ENCODE measurements at regions of chr18 and their contacts with region 1.

Region 1: DNA sequence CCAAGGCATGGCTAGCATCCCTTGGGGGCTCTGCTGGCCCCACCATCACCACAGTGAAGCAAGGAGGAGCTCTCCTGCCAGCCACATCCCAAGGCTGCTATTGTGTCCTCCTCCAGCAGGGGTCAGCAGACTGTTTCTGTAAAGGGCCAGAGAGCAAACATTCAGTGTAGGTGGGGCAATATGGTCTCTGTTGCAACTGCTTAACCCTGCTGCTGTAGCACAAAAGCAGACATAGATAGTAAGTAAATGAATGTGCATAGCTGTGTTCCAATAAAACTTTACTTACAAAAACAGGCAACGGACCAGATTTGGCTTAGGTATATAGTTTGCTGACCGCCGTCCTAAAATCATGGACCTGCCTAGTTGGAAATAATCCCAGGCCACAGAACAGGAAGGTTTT is 36.4 kb upstream of the ZBTB7C start:
- DNase-seq: peak; percentile 89
- H3K4me3 ChIP-seq: no peak overlapping the region
- H3K27ac ChIP-seq: no peak overlapping the region
- H3K4me1 ChIP-seq: no peaks in the 10 kb centered on the region
- H3K27me3 ChIP-seq: peaks cover 56% of the 10 kb centered on the region

Region 2: GRCh38 chr18:47912343-47912742 is 533.2 kb before region 1 on chr18:
- in situ Hi-C with region 1: no loop called
- DNase-seq: no peak
- H3K4me3 ChIP-seq: no peak overlapping the region
- H3K27ac ChIP-seq: no peak overlapping the region
- H3K4me1 ChIP-seq: no peaks in the 10 kb centered on the region
- H3K27me3 ChIP-seq: no peaks in the 10 kb centered on the region

Region 3: DNA sequence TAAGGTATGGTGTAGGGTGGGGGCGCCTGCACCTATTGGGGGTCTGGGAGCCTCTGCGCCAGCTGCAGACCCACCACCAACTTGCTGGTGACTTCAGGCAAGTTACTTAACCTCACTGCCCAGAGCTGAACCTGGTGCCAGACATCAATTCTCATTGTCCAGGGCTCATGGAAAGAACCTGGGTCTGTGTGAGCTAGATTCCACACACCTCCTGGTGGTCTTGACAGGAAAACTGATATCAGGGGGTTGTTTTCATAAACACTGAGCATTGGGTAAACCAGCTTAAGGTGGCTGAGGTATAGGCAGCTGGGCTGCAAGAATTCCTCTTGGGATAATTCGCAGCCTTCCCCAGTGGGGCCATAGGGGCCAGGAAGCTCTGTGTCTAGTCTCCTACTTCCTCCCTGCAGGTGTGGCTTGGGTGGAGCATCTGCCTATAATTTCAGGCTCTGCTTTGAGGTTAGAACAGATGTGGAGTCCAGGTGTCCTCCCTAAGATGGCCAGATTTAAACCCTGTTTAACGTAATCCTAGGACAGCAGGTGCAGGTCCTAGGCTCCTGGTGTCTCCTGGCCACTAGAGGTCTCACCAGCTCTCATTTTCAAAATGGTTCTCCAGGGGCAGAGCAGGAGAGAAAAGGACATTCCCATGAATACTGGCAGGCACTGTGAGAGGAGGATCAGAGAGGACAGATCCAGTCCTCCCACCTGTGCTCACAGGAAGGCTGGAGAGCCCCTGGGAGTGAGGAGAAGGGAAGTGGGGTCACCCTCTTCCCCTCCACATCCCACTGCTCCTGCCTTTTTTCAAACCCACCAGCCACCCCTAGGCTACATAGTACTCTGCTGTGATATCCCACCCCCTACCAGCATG is 414.7 kb before region 1 on chr18:
- in situ Hi-C with region 1: loop called (anchors 5 kb)
- DNase-seq: peak; percentile 73
- H3K4me3 ChIP-seq: no peak overlapping the region
- H3K27ac ChIP-seq: no peak overlapping the region
- H3K4me1 ChIP-seq: peaks cover 6% of the 10 kb centered on the region; the same call in 1 of the 2 replicates
- H3K27me3 ChIP-seq: no peaks in the 10 kb centered on the region

Region 4: DNA sequence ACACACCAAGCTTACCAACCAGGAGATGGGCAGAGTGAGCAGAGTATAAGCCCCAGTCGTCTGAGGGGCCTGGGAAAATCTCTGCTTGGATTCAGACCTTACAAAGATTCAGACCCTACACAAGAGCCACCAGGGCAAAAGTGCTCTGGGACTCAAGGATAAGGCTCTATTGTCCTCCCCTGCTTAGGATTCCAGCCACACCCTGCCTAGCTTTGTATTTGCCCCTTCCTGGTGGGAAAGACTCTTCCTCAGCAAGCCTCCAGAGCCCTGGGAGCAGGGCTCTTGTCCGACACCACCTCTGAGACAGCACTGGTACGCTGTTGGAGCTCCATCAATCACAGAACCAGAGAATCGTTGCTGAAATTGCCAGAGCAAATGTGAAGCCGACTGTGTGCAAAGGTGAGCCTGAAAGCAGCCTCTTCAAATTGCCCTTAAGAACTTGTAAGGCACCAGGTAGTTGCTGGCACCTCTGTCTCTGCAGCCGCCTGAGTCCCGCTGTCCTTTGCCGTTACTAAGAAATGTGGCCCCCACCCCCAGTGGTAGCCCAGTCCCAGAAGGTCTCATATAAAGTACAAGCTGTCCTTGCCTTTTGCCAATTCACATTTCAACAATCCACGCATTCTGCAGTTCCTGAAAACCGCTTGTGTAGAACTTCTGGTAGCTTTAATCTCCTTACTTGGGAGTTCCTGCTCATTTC is 242.0 kb after region 1 on chr18:
- in situ Hi-C with region 1: no loop called
- DNase-seq: no peak
- H3K4me3 ChIP-seq: no peak overlapping the region
- H3K27ac ChIP-seq: no peak overlapping the region
- H3K4me1 ChIP-seq: no peaks in the 10 kb centered on the region
- H3K27me3 ChIP-seq: no peaks in the 10 kb centered on the region

Region 5: DNA sequence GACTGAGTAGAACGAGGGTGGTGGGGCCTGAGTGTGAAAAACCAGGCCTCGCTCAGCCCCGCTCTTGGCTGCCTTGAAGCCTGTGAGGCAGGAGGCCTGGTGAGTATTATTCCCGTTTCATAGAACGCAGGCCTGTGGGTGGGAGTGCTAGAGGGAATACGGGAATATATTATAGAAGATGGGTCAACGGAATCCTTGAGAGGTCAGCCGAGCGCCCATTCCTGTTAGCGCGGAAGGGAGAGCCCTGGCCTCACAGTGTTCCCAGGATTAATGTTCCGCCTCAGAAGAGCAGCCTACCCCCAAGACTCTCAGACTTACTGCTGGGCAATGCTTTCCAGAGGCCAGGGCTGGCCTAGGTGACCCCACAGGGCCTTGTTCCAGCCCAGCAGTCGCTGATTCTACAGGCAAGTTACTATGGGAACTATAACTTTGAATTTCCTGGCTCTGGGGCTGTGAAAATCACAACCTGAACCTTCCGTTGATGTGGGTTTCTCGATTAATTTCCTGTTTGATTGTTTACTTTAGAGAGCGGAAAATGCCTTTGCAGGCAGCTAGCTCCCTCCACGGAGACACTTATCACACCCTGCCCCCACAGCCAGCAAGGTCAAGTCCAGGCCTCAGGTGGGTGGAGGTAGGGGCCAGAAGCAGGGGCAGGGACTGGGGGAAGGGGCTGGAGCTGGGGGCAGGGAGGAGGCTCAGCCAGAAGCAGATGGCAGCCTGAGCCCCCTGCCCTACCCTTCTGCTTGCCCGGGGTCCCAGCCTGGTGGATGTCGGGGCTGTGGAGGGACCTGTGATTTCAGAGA is 396.9 kb after region 1 on chr18:
- in situ Hi-C with region 1: no loop called
- DNase-seq: no peak
- H3K4me3 ChIP-seq: no peak overlapping the region
- H3K27ac ChIP-seq: no peak overlapping the region
- H3K4me1 ChIP-seq: peaks cover 37% of the 10 kb centered on the region
- H3K27me3 ChIP-seq: no peaks in the 10 kb centered on the region

Measured in GM23248 (cell line).